Natural killer cell (primary cell): ENCODE measurements at regions of chr12 and their contacts with region 1.

Region 1: GRCh38 chr12:50084775-50085614 is at the start of gene SMARCD1:
- DNase-seq: peak; percentile 72 to 91
- ATAC-seq: peak; percentile 78 to 93 (median 87)
- H3K4me3 ChIP-seq: peak within 1 kb of the TSS; percentile 61
- H3K4me3 Mint-ChIP-seq: peak within 1 kb of the TSS; percentile 94
- H3K27ac ChIP-seq: peak within 1 kb of the TSS; percentile 86
- H3K27ac Mint-ChIP-seq: peak within 1 kb of the TSS; percentile 89 to 94
- H3K4me1 ChIP-seq: peaks cover 13% of the 10 kb centered on the region
- H3K4me1 Mint-ChIP-seq: peaks cover 33 to 38% of the 10 kb centered on the region in 2 donors
- H3K27me3 ChIP-seq: no peaks in the 10 kb centered on the region
- H3K27me3 Mint-ChIP-seq: no peaks in the 10 kb centered on the region
- CTCF ChIP-seq: no peak
- total RNA-seq, gene SMARCD1: 81.3 to 97.0 (median 88.6) TPM

Region 2: GRCh38 chr12:50070314-50071060 is 14.5 kb before region 1 on chr12:
- intact Hi-C with region 1: no loop called
- DNase-seq: peak; percentile 51 to 83
- ATAC-seq: peak; percentile 60 to 68 (median 63)
- H3K4me3 ChIP-seq: no peak overlapping the region
- H3K4me3 Mint-ChIP-seq: no peak overlapping the region
- H3K27ac ChIP-seq: no peak overlapping the region
- H3K27ac Mint-ChIP-seq: no peak overlapping the region
- H3K4me1 ChIP-seq: peaks cover 9% of the 10 kb centered on the region
- H3K4me1 Mint-ChIP-seq: peaks cover 0 to 10% of the 10 kb centered on the region in 2 donors
- H3K27me3 ChIP-seq: no peaks in the 10 kb centered on the region
- H3K27me3 Mint-ChIP-seq: no peaks in the 10 kb centered on the region
- CTCF ChIP-seq: peak; percentile 85

Region 3: GRCh38 chr12:50111693-50112455 is 26.9 kb after region 1 on chr12 and contains the start of gene COX14:
- intact Hi-C with region 1: loop called (anchors 1 kb)
- DNase-seq: peak; percentile 99 to 100
- ATAC-seq: peak; percentile 83 to 93 (median 85)
- H3K4me3 ChIP-seq: peak within 1 kb of the TSS; percentile 97
- H3K4me3 Mint-ChIP-seq: peak within 1 kb of the TSS; percentile 99
- H3K27ac ChIP-seq: peak within 1 kb of the TSS; percentile 93
- H3K27ac Mint-ChIP-seq: peak within 1 kb of the TSS; percentile 89 to 96
- H3K4me1 ChIP-seq: peaks cover 33% of the 10 kb centered on the region
- H3K4me1 Mint-ChIP-seq: peaks cover 28 to 37% of the 10 kb centered on the region in 2 donors
- H3K27me3 ChIP-seq: no peaks in the 10 kb centered on the region
- H3K27me3 Mint-ChIP-seq: no peaks in the 10 kb centered on the region
- CTCF ChIP-seq: peak; percentile 89
- total RNA-seq, gene COX14: 32.8 to 42.6 (median 36.7) TPM

Region 4: GRCh38 chr12:50167041-50167828 is 82.2 kb after region 1 on chr12 and contains the start of gene CERS5:
- intact Hi-C with region 1: loop called (anchors 1 kb)
- DNase-seq: peak; percentile 93 to 97
- ATAC-seq: peak; percentile 96 to 100 (median 96)
- H3K4me3 ChIP-seq: peak within 1 kb of the TSS; percentile 97
- H3K4me3 Mint-ChIP-seq: peak within 1 kb of the TSS; percentile 93
- H3K27ac ChIP-seq: peak within 1 kb of the TSS; percentile 93
- H3K27ac Mint-ChIP-seq: peak within 1 kb of the TSS; percentile 82 to 91
- H3K4me1 ChIP-seq: peaks cover 17% of the 10 kb centered on the region
- H3K4me1 Mint-ChIP-seq: peaks cover 9 to 33% of the 10 kb centered on the region in 2 donors
- H3K27me3 ChIP-seq: no peaks in the 10 kb centered on the region
- H3K27me3 Mint-ChIP-seq: no peaks in the 10 kb centered on the region
- CTCF ChIP-seq: no peak
- total RNA-seq, gene CERS5: 69.9 to 81.2 (median 75.8) TPM

Region 5: GRCh38 chr12:50314629-50315312 is 229.8 kb after region 1 on chr12:
- intact Hi-C with region 1: loop called (anchors 10 kb)
- DNase-seq: peak in 1 of 2 donors; percentile 40
- ATAC-seq: no peak
- H3K4me3 ChIP-seq: no peak overlapping the region
- H3K4me3 Mint-ChIP-seq: no peak overlapping the region
- H3K27ac ChIP-seq: no peak overlapping the region
- H3K27ac Mint-ChIP-seq: no peak overlapping the region
- H3K4me1 ChIP-seq: no peaks in the 10 kb centered on the region
- H3K4me1 Mint-ChIP-seq: no peaks in the 10 kb centered on the region
- H3K27me3 ChIP-seq: no peaks in the 10 kb centered on the region
- H3K27me3 Mint-ChIP-seq: no peaks in the 10 kb centered on the region
- CTCF ChIP-seq: no peak